A549 (cell line): ENCODE measurements at regions of chr10 and their contacts with region 1.

Region 1: GRCh38 chr10:57657164-57657765 is 610.4 kb downstream of the IPMK start:
- DNase-seq: peak; percentile 21 to 76
- ATAC-seq: peak; percentile 81 to 96
- H3K4me3 ChIP-seq: no peak overlapping the region
- H3K27ac ChIP-seq: no peak overlapping the region
- H3K4me1 ChIP-seq: no peaks in the 10 kb centered on the region
- CTCF ChIP-seq: peak; percentile 86
- EP300 ChIP-seq: no peak
- POLR2A ChIP-seq: no peak
- RAD21 ChIP-seq: peak; percentile 89 to 92

Region 2: GRCh38 chr10:57338823-57339558 is 318.3 kb before region 1 on chr10:
- CTCF ChIA-PET with region 1: interaction called, 57 read pairs
- POLR2A ChIA-PET with region 1: no interaction called
- DNase-seq: peak; percentile 18 to 58
- ATAC-seq: peak; percentile 59 to 69; a peak in 4 of 6 replicates
- H3K4me3 ChIP-seq: no peak overlapping the region
- H3K27ac ChIP-seq: no peak overlapping the region
- H3K4me1 ChIP-seq: no peaks in the 10 kb centered on the region
- CTCF ChIP-seq: peak; percentile 80
- EP300 ChIP-seq: no peak
- POLR2A ChIP-seq: no peak
- RAD21 ChIP-seq: peak; percentile 70 to 81